Posterior vena cava (tissue), 2 donors: ENCODE measurements at regions of chr5 and their contacts with region 1.

Region 1: DNA sequence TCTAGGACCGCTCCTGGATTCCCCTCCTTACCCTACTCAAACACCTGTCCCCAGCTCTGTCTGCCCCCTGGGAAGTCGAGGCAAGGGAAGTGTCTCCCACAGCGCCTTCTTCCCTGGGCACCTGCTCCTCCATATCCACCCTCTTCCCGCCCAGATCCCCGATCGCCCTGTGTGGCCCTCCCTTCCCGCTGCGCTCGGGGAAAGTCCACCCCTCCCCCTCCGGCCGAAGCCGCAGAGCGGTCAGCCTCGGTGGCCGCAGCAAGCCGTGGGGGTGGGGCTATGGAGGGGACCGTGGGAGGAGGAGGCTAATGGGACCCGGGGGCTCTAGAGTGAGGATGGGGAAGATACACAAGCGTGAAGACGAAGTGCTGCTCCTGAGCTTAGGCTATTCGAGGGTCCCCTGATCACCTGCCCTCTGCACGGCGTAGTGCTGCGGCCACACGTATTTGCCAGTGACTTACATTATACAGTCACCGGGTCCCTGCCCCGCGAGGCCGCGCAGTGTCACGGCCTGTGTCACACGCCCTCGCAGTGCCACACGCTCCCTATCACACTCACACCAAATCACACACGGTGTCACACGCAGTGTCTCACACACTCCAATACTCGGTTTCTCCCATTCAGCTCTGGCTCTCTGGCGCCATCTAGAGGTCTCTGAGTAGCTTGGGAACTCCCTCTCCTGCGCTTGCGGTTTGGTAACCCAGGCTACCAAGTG is 658 bp upstream of the PCDH1 start:
- DNase-seq: peak; percentile 95

Region 2: DNA sequence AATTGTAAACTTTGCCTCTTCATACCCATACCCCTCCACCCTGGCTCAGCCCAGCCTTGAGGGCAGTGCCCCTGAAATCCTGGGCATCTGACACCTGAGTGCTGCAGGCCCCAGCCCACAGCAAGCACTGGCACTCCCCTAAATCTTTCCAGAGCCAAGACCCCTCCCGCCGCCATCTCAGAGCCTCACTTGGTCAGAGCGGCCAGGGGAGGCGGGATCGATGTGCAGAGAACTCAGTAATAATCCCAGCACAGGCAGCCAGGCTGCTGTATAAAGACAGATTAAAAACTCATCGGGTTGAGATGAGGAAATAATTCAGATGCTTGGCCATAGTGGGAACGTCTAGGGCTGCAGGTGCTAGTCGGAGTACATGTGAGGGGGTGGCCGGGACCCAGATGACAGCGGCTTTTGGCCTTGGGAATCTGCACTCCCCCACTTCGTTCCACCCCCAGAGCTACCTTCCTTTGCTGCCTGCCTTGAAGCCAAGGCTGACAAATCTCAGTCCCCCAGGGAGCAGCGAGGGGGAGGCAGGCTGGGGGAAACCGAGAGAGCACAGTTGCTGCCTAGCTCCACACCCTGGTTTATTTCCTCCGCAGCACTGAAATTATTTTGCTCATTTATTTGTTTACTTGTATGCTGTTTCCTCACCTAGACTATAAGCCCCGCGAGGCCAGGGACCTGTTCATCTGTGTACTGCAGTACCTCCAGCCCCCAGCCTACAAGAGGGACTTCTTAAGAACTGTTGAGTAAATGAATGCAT is 177.3 kb before region 1 on chr5:
- intact Hi-C with region 1: loop called (anchors 2 to 5 kb)
- DNase-seq: peak; percentile 60

Region 3: DNA sequence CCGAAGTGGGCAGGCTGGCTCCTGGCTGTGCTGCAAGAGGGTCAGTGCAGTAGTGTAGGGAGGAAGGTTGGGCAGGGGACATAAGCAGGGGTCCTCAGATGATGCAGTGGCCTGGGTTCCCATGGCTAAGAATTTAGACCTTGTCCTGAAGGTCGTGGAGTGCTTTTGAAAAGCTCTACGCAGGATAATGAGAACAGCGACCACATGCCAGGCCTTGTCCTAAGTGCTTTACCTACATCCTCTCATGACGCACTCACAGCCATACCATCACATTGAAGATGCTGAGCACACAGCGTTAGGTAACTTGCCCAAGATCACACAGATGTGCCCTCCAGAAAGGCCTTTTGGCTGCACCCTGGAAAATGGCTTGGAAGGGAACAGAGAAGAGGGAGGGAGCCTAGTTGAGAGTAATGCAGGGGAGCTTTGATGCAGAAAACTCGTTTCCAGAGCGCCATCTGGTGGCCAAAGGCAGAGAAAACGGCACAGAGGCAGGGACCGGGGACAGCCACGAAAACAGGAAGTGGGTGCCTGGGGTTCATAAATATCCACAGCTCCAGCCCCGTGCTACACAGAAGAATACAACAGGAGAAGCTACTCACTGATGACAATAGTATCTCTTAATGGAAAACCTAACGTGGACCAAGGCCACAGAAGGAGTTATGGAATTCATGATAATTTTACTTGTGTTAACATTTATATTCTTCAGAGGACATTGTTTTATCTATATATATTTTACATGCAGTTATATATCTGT is 81.8 kb after region 1 on chr5:
- intact Hi-C with region 1: loop called (anchors 5 kb)
- DNase-seq: peak; percentile 96